Esophagus muscularis mucosa (tissue), 4 donors: ENCODE measurements at regions of chr7 and their contacts with region 1.

Region 1: DNA sequence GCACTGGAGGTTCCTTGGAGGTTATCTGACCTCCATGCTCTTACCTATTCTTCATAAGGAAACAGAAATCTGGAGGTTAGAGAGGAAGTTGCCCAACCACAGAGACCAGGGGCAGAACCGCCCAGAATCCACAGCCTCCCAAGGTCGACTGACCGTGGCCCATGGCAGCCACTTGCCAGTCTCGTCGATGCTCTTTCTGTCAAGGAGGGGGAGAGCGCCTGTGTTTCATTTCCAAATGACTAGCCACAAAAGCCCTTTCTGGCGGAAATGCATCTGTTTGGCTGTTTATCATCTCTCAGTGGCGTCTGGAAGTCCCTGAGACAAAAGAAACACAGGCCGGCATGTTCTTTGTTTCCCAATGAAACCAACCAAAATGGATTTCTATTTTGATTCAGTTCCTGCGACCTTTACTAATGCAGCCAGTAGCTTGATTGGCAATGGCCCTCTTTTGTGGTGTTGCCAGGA is 2.9 kb downstream of the RAMP3 start:
- DNase-seq: no peak
- H3K4me3 ChIP-seq: peak overlapping the region in 2 of 4 donors; percentile 16 to 50
- H3K27ac ChIP-seq: no peak overlapping the region
- H3K4me1 ChIP-seq: peaks cover 3 to 12% (median 11%) of the 10 kb centered on the region in 4 donors
- H3K27me3 ChIP-seq: peaks cover 0 to 44% (median 6%) of the 10 kb centered on the region in 4 donors
- CTCF ChIP-seq: no peak
- EP300 ChIP-seq: no peak
- POLR2A ChIP-seq: no peak

Region 2: GRCh38 chr7:45203936-45204445 is 43.5 kb after region 1 on chr7:
- intact Hi-C with region 1: loop called (anchors 5 kb)
- DNase-seq: no peak
- H3K4me3 ChIP-seq: peak overlapping the region in 3 of 4 donors; percentile 37 to 42 (median 37)
- H3K27ac ChIP-seq: peak overlapping the region; percentile 20 to 66 (median 49)
- H3K4me1 ChIP-seq: peaks cover 8 to 13% (median 12%) of the 10 kb centered on the region in 4 donors
- H3K27me3 ChIP-seq: no peaks in the 10 kb centered on the region
- CTCF ChIP-seq: no peak
- EP300 ChIP-seq: no peak
- POLR2A ChIP-seq: no peak

Region 3: DNA sequence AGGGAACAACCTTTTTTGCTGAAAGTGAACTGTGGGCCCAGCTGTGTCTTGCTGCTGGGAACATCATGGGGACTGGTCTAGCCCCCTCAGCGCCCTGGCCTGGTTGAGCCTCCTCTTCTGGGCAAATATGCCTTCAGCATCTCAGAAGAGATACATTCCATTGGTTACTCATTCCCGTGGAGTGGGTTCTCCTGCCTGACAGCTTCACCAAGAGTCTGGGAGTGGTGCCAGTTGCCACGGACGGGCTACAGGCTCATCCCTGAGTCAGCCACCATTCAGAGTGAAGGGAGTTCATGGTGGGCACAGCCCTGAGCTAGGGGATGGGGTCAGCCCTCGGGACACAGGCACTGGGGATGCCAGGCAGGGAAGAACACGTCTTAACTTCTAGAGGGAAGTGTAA is 79.0 kb after region 1 on chr7:
- intact Hi-C with region 1: no loop called
- DNase-seq: peak; percentile 90
- H3K4me3 ChIP-seq: no peak overlapping the region
- H3K27ac ChIP-seq: peak overlapping the region in 3 of 4 donors; percentile 5 to 60 (median 30)
- H3K4me1 ChIP-seq: peaks cover 0 to 9% (median 2%) of the 10 kb centered on the region in 4 donors
- H3K27me3 ChIP-seq: peaks cover 0 to 32% (median 0%) of the 10 kb centered on the region in 4 donors
- CTCF ChIP-seq: no peak
- EP300 ChIP-seq: no peak
- POLR2A ChIP-seq: no peak

Region 4: DNA sequence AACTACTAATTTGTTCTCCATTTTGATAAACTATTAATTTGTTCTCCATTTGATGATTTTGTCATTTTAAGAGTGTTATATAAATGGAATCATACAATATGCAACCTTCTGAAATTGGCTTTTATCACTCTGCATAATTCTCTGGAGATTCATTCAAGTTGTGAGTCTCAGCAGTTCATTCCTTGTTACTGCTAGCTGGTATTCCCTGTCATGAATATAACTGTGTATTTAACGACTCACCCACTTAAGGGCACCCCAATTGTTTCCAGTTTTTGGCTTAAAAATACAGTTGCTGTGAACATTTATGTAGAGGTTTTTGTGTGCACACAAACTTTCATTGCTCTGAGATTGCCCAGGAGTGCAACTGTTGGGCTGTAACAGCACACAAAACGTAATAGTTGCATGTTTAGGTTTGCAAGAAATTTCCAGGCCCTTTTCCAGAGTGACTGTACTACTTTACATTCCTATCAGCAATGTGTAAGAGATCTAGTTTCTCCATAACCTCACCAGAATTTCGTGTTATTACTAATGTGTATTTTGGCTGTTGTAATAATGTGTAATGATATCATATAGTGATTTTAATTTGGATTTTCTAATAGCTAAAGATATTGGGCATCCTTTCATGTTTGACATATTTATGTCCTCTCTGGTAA is 260.5 kb after region 1 on chr7:
- intact Hi-C with region 1: no loop called
- DNase-seq: no peak
- H3K4me3 ChIP-seq: no peak overlapping the region
- H3K27ac ChIP-seq: no peak overlapping the region
- H3K4me1 ChIP-seq: no peaks in the 10 kb centered on the region
- H3K27me3 ChIP-seq: peaks cover 0 to 12% (median 0%) of the 10 kb centered on the region in 4 donors
- CTCF ChIP-seq: no peak
- EP300 ChIP-seq: no peak
- POLR2A ChIP-seq: no peak

Region 5: GRCh38 chr7:45863715-45864114 is 703.3 kb after region 1 on chr7:
- intact Hi-C with region 1: loop called (anchors 10 kb)
- DNase-seq: no peak
- H3K4me3 ChIP-seq: no peak overlapping the region
- H3K27ac ChIP-seq: no peak overlapping the region
- H3K4me1 ChIP-seq: no peaks in the 10 kb centered on the region
- H3K27me3 ChIP-seq: peaks cover 0 to 50% (median 0%) of the 10 kb centered on the region in 4 donors
- CTCF ChIP-seq: no peak
- EP300 ChIP-seq: no peak
- POLR2A ChIP-seq: no peak